ENCODE measurements at regions of chr11 and their contacts with region 1.

Region 1: GRCh38 chr11:56152333-56152732 is 7.8 kb downstream of the OR8K5 start:
- DNase-seq: no peak
- H3K4me3 ChIP-seq: no peak overlapping the region
- H3K27ac ChIP-seq: no peak overlapping the region
- H3K4me1 ChIP-seq: no peaks in the 10 kb centered on the region
- H3K27me3 ChIP-seq: no peaks in the 10 kb centered on the region
- CTCF ChIP-seq: no peak
- POLR2A ChIP-seq: no peak

Region 2: DNA sequence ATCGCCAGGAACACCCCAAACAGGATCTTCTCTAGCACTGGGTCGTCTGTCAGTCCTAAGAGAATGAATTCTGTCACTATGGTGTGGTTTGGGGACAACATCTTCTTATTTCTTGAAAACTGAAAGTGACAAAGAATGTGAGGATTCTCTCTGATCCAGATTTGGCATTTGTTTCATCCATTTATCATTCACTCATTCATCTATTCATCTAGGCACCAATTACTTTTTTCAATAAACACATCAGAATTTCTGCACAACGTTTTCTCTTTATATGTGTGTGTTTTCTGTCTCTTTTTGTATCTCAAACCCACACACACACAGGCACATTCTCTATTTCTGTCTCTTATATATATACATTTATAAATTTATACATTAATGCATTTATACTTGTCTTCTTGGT is 425.3 kb after region 1 on chr11 and contains the start of gene OR5M10:
- intact Hi-C with region 1: loop called (anchors 5 kb)
- DNase-seq: no peak
- H3K4me3 ChIP-seq: no peak within 1 kb of the TSS
- H3K27ac ChIP-seq: no peak within 1 kb of the TSS
- H3K4me1 ChIP-seq: no peaks in the 10 kb centered on the region
- H3K27me3 ChIP-seq: no peaks in the 10 kb centered on the region
- CTCF ChIP-seq: no peak
- POLR2A ChIP-seq: no peak
- total RNA-seq, gene OR5M10: not detected